Lower lobe of right lung (tissue), 2 donors: ENCODE measurements at regions of chr18 and their contacts with region 1.

Region 1: GRCh38 chr18:34787931-34788532 is 77.9 kb downstream of the DTNA start:
- DNase-seq: no peak
- ATAC-seq: peak in 1 of 2 donors; percentile 68
- H3K4me3 ChIP-seq: no peak overlapping the region
- H3K27ac ChIP-seq: no peak overlapping the region
- H3K4me1 ChIP-seq: no peaks in the 10 kb centered on the region
- H3K27me3 ChIP-seq: no peaks in the 10 kb centered on the region
- CTCF ChIP-seq: peak; percentile 70

Region 2: GRCh38 chr18:34117319-34117718 is 670.7 kb before region 1 on chr18:
- intact Hi-C with region 1: loop called (anchors 10 kb)
- DNase-seq: no peak
- ATAC-seq: peak; percentile 57 to 68
- H3K4me3 ChIP-seq: no peak overlapping the region
- H3K27ac ChIP-seq: no peak overlapping the region
- H3K4me1 ChIP-seq: no peaks in the 10 kb centered on the region
- H3K27me3 ChIP-seq: no peaks in the 10 kb centered on the region
- CTCF ChIP-seq: no peak

Region 3: DNA sequence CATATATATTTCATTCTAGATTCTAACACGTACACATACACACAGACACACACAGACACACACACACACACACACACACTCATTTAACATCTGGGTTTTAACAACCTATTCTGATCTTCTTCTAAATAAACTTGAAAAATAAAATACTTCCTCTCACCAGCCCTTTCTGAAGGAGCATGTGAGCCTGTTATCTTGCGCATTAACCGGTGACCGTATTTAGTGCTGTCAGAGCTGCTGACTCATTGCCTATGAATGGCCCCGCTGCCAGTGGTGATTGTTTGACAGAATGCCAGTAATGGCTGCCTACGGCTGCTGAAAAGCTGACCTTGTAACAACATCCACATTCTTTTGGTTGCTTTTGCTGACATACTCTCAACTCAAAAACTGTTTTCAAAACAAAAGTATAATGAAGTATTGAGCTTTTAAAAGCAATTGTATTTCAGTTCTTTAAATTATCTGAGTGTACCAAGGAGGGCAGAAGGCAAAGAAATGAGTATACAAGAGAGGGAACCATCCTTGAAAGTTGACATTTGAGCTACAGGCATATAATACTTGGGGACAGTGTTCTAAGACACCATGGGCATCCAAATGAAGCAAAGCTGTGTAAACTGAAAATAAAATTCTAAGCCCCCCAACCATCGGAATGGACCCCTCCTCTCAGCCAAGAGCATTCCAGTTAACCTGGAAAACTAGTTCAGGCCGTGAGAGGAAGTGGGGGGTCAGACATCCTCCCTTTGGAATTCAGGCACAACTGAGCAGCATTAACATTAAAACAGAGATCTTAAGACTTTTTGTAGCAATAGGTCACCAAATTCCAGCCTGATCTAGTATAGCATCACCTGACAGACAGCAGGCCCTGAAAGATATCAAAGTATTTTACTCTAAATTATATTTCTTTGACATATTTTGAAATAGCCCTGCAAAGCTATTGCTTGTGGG is 128.2 kb before region 1 on chr18:
- intact Hi-C with region 1: loop called (anchors 10 kb)
- DNase-seq: peak; percentile 73
- ATAC-seq: peak; percentile 94
- H3K4me3 ChIP-seq: no peak overlapping the region
- H3K27ac ChIP-seq: peak overlapping the region; percentile 44
- H3K4me1 ChIP-seq: peaks cover 8% of the 10 kb centered on the region
- H3K27me3 ChIP-seq: no peaks in the 10 kb centered on the region
- CTCF ChIP-seq: no peak